GM12878 (cell line): ENCODE measurements at regions of chr2 and their contacts with region 1.

Region 1: GRCh38 chr2:45935791-45936622 is 284.5 kb downstream of the PRKCE start:
- DNase-seq: no peak
- ATAC-seq: peak; percentile 94
- H3K4me3 ChIP-seq: no peak overlapping the region
- H3K27ac ChIP-seq: peak overlapping the region; percentile 48
- H3K4me1 ChIP-seq: peaks cover 7% of the 10 kb centered on the region
- H3K27me3 ChIP-seq: no peaks in the 10 kb centered on the region
- CTCF ChIP-seq: peak; percentile 67 to 91 (median 70)
- EP300 ChIP-seq: no peak
- POLR2A ChIP-seq: no peak
- RAD21 ChIP-seq: peak; percentile 95

Region 2: DNA sequence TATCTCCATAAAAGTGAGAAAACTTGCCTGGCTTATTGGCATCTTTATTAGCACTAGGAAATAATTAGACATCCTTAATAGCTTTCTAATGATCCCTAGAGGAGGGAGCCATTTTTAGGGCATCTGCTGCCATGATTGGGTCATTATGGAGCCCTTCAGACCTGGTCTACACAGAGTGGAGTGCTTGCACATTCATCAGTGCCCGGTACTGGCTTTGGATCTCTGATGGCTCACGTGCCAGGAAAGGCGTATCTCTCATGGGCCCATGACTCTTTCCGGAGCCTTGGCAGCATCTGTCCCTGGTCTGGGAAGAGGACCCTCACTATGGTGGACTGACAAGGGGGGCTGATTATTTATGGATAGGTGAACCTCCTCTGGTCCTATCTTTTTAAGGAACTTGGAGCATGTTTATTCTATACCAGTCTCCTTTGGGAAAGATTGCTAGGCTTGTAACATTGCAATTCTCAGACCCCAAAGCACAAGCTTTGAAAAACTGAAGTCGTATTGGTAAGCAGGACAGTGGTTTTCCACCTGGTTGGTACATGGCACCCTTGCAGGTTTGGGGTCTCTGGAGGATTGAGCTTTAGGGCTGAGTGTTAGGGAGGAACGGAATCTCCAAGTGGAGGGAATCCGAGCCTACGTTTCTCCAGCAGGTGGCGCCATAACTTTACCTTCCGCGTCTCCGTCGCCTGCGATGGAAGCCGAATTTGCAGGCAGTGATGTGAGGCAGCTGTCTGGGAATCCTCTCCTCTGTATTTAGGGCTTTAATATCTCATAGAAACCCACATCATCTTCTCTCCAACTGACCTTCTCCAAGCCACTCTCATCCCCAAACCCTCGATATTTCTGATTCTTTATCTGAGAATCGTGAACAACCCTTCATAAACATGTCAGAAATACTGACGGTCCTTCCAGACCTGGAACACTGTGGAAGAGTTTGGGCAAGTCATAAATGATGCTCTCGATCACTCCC is 954.6 kb before region 1 on chr2:
- CTCF ChIA-PET with region 1: interaction called, 3 read pairs
- POLR2A ChIA-PET with region 1: no interaction called
- RAD21 ChIA-PET with region 1: no interaction called
- SMC1A ChIA-PET with region 1: no interaction called
- in situ Hi-C with region 1: loop called (anchors 25 kb)
- intact Hi-C with region 1: no loop called
- DNase-seq: no peak
- ATAC-seq: peak; percentile 92
- H3K4me3 ChIP-seq: no peak overlapping the region
- H3K27ac ChIP-seq: no peak overlapping the region
- H3K4me1 ChIP-seq: peaks cover 4% of the 10 kb centered on the region
- H3K27me3 ChIP-seq: no peaks in the 10 kb centered on the region; a peak in 1 of 4 replicates
- CTCF ChIP-seq: peak; percentile 76 to 89 (median 77)
- EP300 ChIP-seq: no peak
- POLR2A ChIP-seq: no peak
- RAD21 ChIP-seq: peak; percentile 92

Region 3: GRCh38 chr2:45643543-45644542 is 292.2 kb before region 1 on chr2:
- CTCF ChIA-PET with region 1: interaction called, 64 read pairs
- POLR2A ChIA-PET with region 1: interaction called, 3 read pairs
- RAD21 ChIA-PET with region 1: interaction called, 39 read pairs
- SMC1A ChIA-PET with region 1: interaction called, 56 read pairs
- in situ Hi-C with region 1: loop called (anchors 5 kb)
- intact Hi-C with region 1: loop called (anchors 1 kb)
- DNase-seq: no peak
- ATAC-seq: peak; percentile 99
- H3K4me3 ChIP-seq: peak overlapping the region; percentile 69; the same call in 1 of the 2 replicates
- H3K27ac ChIP-seq: no peak overlapping the region
- H3K4me1 ChIP-seq: no peaks in the 10 kb centered on the region
- H3K27me3 ChIP-seq: no peaks in the 10 kb centered on the region; a peak in 1 of 4 replicates
- CTCF ChIP-seq: peak; percentile 80 to 84 (median 81)
- EP300 ChIP-seq: no peak
- POLR2A ChIP-seq: no peak
- RAD21 ChIP-seq: peak; percentile 93

Region 4: GRCh38 chr2:45778720-45779171 is 157.3 kb before region 1 on chr2:
- CTCF ChIA-PET with region 1: interaction called, 28 read pairs
- POLR2A ChIA-PET with region 1: no interaction called
- RAD21 ChIA-PET with region 1: interaction called, 30 read pairs
- SMC1A ChIA-PET with region 1: interaction called, 14 read pairs
- in situ Hi-C with region 1: no loop called
- intact Hi-C with region 1: loop called (anchors 1 kb)
- DNase-seq: peak; percentile 11
- ATAC-seq: peak; percentile 90
- H3K4me3 ChIP-seq: no peak overlapping the region
- H3K27ac ChIP-seq: no peak overlapping the region
- H3K4me1 ChIP-seq: peaks cover 16% of the 10 kb centered on the region
- H3K27me3 ChIP-seq: no peaks in the 10 kb centered on the region
- CTCF ChIP-seq: peak; percentile 49 to 60 (median 53); a peak in 5 of 6 replicates
- EP300 ChIP-seq: no peak
- POLR2A ChIP-seq: no peak
- RAD21 ChIP-seq: peak; percentile 72

Region 5: DNA sequence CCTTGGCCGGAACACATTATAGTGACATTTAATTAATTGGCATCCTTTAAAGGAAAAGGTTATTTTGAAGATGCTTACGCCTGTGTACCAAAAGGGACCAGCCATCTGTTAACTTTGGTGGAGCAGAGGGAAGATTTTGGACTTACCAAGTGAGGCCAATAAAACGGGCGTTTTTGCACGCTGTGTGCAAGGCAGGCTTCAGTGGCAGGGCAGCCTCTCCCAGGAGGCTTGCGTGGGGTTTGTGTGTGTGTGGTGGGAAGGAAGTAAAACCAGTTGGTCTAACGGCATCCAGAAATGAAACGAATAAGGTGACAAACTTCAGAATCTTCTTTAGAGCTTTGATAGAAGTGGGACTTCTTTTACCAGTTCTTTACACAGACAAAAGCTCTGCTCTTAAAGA is 92.9 kb before region 1 on chr2:
- CTCF ChIA-PET with region 1: interaction called, 51 read pairs
- POLR2A ChIA-PET with region 1: interaction called, 7 read pairs
- RAD21 ChIA-PET with region 1: interaction called, 23 read pairs
- SMC1A ChIA-PET with region 1: interaction called, 31 read pairs
- in situ Hi-C with region 1: no loop called
- intact Hi-C with region 1: no loop called
- DNase-seq: no peak
- ATAC-seq: peak; percentile 76
- H3K4me3 ChIP-seq: peak overlapping the region; percentile 35; the same call in 1 of the 2 replicates
- H3K27ac ChIP-seq: peak overlapping the region; percentile 94
- H3K4me1 ChIP-seq: peaks cover 70% of the 10 kb centered on the region
- H3K27me3 ChIP-seq: no peaks in the 10 kb centered on the region
- CTCF ChIP-seq: no peak
- EP300 ChIP-seq: peak; percentile 91 to 97
- POLR2A ChIP-seq: no peak
- RAD21 ChIP-seq: no peak

Region 6: GRCh38 chr2:45869165-45869501 is 66.9 kb before region 1 on chr2:
- CTCF ChIA-PET with region 1: interaction called, 5 read pairs
- POLR2A ChIA-PET with region 1: interaction called, 3 read pairs
- RAD21 ChIA-PET with region 1: interaction called, 15 read pairs
- SMC1A ChIA-PET with region 1: interaction called, 4 read pairs
- in situ Hi-C with region 1: no loop called
- intact Hi-C with region 1: no loop called
- DNase-seq: no peak
- ATAC-seq: no peak
- H3K4me3 ChIP-seq: no peak overlapping the region
- H3K27ac ChIP-seq: no peak overlapping the region
- H3K4me1 ChIP-seq: peaks cover 23% of the 10 kb centered on the region
- H3K27me3 ChIP-seq: no peaks in the 10 kb centered on the region
- CTCF ChIP-seq: no peak
- EP300 ChIP-seq: no peak
- POLR2A ChIP-seq: no peak
- RAD21 ChIP-seq: no peak

Region 7: DNA sequence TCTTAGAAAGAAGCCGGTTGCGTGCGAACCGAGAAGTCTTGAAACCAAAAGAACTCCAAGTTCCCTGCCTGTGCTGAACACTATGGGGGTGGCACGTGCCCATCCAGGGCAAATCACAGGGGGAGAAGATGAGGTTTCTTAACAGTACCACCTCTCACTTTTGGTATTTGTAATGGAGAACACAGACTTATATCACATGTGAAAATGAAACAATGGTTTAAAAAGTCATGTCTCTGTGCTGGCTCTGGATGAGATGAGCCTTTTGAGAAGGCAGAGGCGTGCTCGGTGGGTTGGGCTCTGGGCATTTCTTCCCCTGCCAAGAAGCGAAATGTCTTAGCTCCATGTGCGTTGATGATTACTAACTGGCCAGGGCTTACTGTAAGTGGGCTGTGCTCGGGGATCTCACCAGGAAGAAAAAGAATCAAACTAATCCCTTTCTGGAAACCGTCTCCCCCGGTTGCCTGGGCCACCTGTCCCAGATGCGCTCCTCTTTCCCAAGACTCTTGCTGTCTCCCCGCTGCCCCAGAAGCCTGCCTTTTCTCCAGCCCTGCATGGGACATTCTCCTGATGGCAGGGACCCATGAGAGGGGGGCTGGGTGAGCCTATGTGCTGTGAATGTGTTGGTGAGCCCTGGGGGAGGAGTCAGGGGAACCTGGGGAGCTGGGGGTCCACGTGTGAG is 31.6 kb before region 1 on chr2:
- CTCF ChIA-PET with region 1: interaction called, 5 read pairs
- POLR2A ChIA-PET with region 1: no interaction called
- RAD21 ChIA-PET with region 1: interaction called, 6 read pairs
- SMC1A ChIA-PET with region 1: interaction called, 11 read pairs
- in situ Hi-C with region 1: no loop called
- intact Hi-C with region 1: no loop called
- DNase-seq: no peak
- ATAC-seq: peak; percentile 97
- H3K4me3 ChIP-seq: no peak overlapping the region
- H3K27ac ChIP-seq: peak overlapping the region; percentile 79
- H3K4me1 ChIP-seq: peaks cover 35% of the 10 kb centered on the region
- H3K27me3 ChIP-seq: no peaks in the 10 kb centered on the region
- CTCF ChIP-seq: no peak
- EP300 ChIP-seq: peak; percentile 52 to 54; a peak in 1 of 4 replicates
- POLR2A ChIP-seq: no peak
- RAD21 ChIP-seq: no peak